Body of pancreas (tissue), 4 donors: ENCODE measurements at regions of chr12 and their contacts with region 1.

Region 1: GRCh38 chr12:57904848-57905811 is 36.2 kb upstream of the ATP23 start:
- DNase-seq: peak; percentile 88 to 91 (median 90)
- ATAC-seq: peak; percentile 100
- H3K4me3 ChIP-seq: no peak overlapping the region
- H3K27ac ChIP-seq: peak overlapping the region in 2 of 4 donors; percentile 40 to 61
- H3K4me1 ChIP-seq: peaks cover 5% of the 10 kb centered on the region
- H3K27me3 ChIP-seq: no peaks in the 10 kb centered on the region
- CTCF ChIP-seq: peak; percentile 99 to 100 (median 100)
- POLR2A ChIP-seq: no peak

Region 2: GRCh38 chr12:57832966-57833365 is 72.2 kb before region 1 on chr12:
- intact Hi-C with region 1: loop called (anchors 5 kb)
- DNase-seq: no peak
- ATAC-seq: no peak
- H3K4me3 ChIP-seq: no peak overlapping the region
- H3K27ac ChIP-seq: peak overlapping the region in 2 of 4 donors; percentile 30 to 55
- H3K4me1 ChIP-seq: peaks cover 89% of the 10 kb centered on the region
- H3K27me3 ChIP-seq: no peaks in the 10 kb centered on the region
- CTCF ChIP-seq: no peak
- POLR2A ChIP-seq: no peak

Region 3: DNA sequence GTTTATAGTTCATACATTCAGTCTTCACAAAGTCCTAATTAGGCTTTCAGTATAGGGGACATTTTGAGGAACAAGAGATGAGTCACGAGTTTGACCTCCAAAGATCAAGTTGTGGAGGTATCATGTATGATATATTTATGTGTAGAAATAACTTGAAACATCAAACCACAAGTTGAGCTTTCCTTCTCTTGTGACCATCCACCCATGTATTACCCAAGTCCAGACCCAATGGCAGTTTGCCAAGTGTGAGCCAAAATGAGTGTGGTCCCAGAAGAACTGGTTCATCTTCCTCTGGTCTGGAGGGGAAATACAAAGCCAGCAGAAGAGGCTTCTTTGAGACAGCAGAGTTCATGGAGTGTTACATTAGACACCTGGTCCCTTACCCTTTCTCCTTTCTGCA is 141.1 kb after region 1 on chr12:
- intact Hi-C with region 1: no loop called
- DNase-seq: no peak
- ATAC-seq: no peak
- H3K4me3 ChIP-seq: no peak overlapping the region
- H3K27ac ChIP-seq: no peak overlapping the region
- H3K4me1 ChIP-seq: no peaks in the 10 kb centered on the region
- H3K27me3 ChIP-seq: no peaks in the 10 kb centered on the region
- CTCF ChIP-seq: no peak
- POLR2A ChIP-seq: no peak

Region 4: DNA sequence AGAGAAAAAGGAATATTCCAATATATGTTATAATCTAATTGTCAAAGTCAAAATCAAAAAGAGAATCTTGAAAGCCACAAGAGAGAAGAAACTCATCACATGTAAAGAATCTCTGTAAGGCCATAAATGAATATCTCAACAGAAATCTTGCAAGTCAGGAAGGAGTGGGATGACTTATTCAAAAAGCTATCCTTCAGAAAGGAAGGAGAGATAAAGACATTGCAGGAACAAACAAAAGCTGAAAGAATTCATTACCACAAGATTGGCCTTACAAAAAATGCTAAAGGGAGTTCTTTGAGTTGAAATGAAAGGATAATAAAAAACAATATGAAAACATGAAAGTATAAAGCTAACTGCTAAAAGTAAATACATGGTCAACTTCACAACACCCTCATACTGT is 728.3 kb after region 1 on chr12:
- intact Hi-C with region 1: no loop called
- DNase-seq: no peak
- ATAC-seq: no peak
- H3K4me3 ChIP-seq: no peak overlapping the region
- H3K27ac ChIP-seq: no peak overlapping the region
- H3K4me1 ChIP-seq: no peaks in the 10 kb centered on the region
- H3K27me3 ChIP-seq: no peaks in the 10 kb centered on the region
- CTCF ChIP-seq: no peak
- POLR2A ChIP-seq: no peak